HepG2 (cell line): ENCODE measurements at regions of chr5 and their contacts with region 1.

Region 1: DNA sequence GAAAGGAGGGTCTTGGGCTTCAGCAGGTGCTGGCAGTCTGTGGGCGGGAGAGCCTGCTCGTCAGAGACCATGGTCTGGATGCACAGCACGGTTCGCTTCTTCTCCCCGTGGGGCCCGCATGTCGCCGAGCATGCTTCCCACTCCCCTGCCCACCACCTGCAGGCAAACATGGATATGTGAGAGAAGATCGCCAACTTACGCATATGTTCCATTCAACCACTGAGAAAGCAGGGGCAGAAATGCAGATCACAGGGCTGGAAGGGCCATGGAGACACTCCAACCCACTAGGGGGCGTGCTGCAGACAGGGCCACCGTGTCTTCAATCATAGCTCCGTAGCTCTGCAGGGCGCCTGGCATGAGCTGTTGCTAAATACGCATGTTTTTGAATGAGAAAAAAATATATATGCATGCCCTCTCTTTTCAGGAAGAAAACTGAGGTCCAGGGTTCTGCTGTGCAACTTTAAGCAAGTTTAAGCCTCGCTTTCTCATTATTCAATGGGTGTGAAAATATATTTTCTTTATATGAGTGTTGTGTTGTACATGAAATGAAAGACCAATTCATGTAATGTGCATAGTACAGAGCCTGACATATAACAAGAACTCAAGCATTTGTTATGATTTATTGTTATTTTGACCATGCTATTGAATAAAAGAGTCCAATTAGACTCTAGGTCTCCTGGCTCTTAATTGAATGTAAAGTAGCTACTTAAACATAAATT is 148.0 kb downstream of the TARS1 start:
- DNase-seq: peak; percentile 34
- ATAC-seq: peak; percentile 94
- H3K4me3 ChIP-seq: no peak overlapping the region
- H3K27ac ChIP-seq: no peak overlapping the region
- H3K4me1 ChIP-seq: peaks cover 1% of the 10 kb centered on the region
- H3K27me3 ChIP-seq: no peaks in the 10 kb centered on the region
- CTCF ChIP-seq: peak; percentile 70
- EP300 ChIP-seq: no peak
- POLR2A ChIP-seq: no peak
- RAD21 ChIP-seq: 0 out of 2 replicates have a peak, but pooled peaks have one; percentile 23

Region 2: DNA sequence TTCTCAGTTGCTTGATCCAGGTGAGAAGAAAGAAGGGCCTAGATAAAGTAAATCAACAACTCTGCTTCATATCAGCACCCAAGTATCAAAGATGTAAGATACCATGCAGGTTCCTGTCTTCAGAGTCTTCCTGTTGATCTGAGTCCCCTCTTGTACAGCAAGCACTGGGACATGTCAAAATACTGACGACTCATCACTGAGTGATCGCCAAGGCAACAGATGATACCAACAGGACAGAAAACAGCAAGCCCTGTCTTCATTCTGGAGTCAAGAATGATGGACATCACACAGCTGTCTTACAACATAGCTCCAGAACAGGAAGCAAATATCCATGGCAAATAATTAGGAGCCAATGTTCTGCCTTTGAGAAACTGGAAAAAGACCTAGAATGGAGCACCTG is 64.3 kb before region 1 on chr5:
- CTCF ChIA-PET with region 1: no interaction called
- POLR2A ChIA-PET with region 1: no interaction called
- in situ Hi-C with region 1: no loop called
- intact Hi-C with region 1: loop called (anchors 10 kb)
- DNase-seq: no peak
- ATAC-seq: no peak
- H3K4me3 ChIP-seq: no peak overlapping the region
- H3K27ac ChIP-seq: no peak overlapping the region
- H3K4me1 ChIP-seq: peaks cover 15% of the 10 kb centered on the region
- H3K27me3 ChIP-seq: no peaks in the 10 kb centered on the region
- CTCF ChIP-seq: no peak
- EP300 ChIP-seq: no peak
- POLR2A ChIP-seq: no peak
- RAD21 ChIP-seq: no peak